Breast epithelium (tissue), 4 donors: ENCODE measurements at regions of chr4 and their contacts with region 1.

Region 1: GRCh38 chr4:103429283-103429682 is 231.1 kb upstream of the CENPE start:
- DNase-seq: no peak
- H3K4me3 ChIP-seq: no peak overlapping the region
- H3K27ac ChIP-seq: no peak overlapping the region
- H3K4me1 ChIP-seq: no peaks in the 10 kb centered on the region
- H3K27me3 ChIP-seq: no peaks in the 10 kb centered on the region
- CTCF ChIP-seq: no peak
- POLR2A ChIP-seq: no peak

Region 2: DNA sequence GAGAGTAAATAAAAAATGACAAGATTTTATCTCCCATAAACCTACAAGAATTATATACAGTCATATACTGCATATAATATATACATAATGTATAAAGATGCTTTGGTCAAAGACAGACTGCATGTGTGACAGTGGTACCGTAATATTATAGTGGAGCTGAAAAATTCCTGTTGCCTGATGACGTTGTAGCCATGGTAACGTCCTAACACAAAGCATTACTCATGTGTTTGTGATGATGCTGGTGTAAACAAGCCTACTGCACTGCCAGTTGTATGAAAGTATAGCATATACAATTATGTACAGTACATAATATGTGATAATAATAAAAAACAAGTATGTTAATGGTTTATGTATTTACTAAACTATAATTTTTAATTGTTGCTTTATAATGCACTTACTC is 14.0 kb after region 1 on chr4:
- intact Hi-C with region 1: loop called (anchors 1 kb)
- DNase-seq: no peak
- H3K4me3 ChIP-seq: no peak overlapping the region
- H3K27ac ChIP-seq: no peak overlapping the region
- H3K4me1 ChIP-seq: no peaks in the 10 kb centered on the region
- H3K27me3 ChIP-seq: no peaks in the 10 kb centered on the region
- CTCF ChIP-seq: no peak
- POLR2A ChIP-seq: no peak